Endothelial cell of umbilical vein (primary cell): ENCODE measurements at regions of chr1 and their contacts with region 1.

Region 1: DNA sequence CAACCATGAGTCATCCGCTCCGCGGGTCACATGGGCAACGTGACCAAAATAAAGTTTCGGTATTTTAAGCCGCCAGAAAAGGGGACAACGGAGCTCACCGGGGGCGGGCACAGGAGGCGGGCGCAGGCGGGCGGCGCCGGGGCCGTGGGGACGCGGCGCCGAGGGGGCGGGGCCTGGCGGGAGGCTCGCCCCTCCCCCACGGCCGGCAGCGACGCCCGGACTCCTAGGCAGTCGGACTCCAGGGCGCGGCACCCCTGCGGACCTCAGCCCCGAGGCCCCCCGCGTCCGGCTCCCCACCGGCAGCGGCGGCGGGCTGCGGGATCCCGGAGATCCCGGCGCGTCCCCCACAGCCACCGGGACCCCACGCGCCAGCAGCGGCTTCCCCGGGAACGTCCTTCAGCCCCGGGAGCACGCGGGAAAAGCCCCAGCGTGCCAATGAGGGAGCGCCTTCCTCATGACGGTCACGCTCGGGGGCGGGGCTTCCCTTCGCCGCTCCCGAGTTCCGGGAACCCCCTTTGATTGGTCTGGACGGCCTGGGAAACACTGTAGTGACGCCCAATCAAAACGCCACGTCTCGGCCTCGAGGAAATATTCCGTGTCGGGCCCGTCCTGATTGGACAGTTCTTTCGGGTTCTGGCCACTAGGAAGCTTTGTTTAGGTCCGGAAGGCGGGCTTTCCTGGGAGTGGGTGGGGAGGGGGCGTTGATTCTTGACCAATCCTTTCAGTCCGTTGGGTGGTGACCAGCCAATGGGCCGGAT is 515 bp upstream of the CAMTA1 start:
- DNase-seq: peak; percentile 100
- H3K4me3 ChIP-seq: peak overlapping the region; percentile 44 to 83 (median 79)
- H3K27ac ChIP-seq: peak overlapping the region; percentile 95
- H3K4me1 ChIP-seq: peaks cover 18% of the 10 kb centered on the region
- H3K27me3 ChIP-seq: no peaks in the 10 kb centered on the region
- CTCF ChIP-seq: no peak
- POLR2A ChIP-seq: peak; percentile 66

Region 2: GRCh38 chr1:6489799-6490180 is 294.9 kb before region 1 on chr1:
- CTCF ChIA-PET with region 1: no interaction called
- POLR2A ChIA-PET with region 1: no interaction called
- dilution Hi-C with region 1: no loop called
- intact Hi-C with region 1: loop called (anchors 10 kb)
- DNase-seq: peak; percentile 71
- H3K4me3 ChIP-seq: peak overlapping the region; percentile 26 to 62 (median 43)
- H3K27ac ChIP-seq: peak overlapping the region; percentile 86
- H3K4me1 ChIP-seq: peaks cover 44% of the 10 kb centered on the region
- H3K27me3 ChIP-seq: no peaks in the 10 kb centered on the region
- CTCF ChIP-seq: peak; percentile 90 to 97
- POLR2A ChIP-seq: no peak

Region 3: GRCh38 chr1:6701437-6702153 is 83.1 kb before region 1 on chr1 and contains the start of gene DNAJC11:
- CTCF ChIA-PET with region 1: interaction called, 9 read pairs
- POLR2A ChIA-PET with region 1: no interaction called
- dilution Hi-C with region 1: no loop called
- intact Hi-C with region 1: loop called (anchors 1 kb)
- DNase-seq: peak; percentile 86
- H3K4me3 ChIP-seq: peak within 1 kb of the TSS; percentile 77 to 91 (median 80)
- H3K27ac ChIP-seq: peak within 1 kb of the TSS; percentile 59
- H3K4me1 ChIP-seq: peaks cover 9% of the 10 kb centered on the region
- H3K27me3 ChIP-seq: no peaks in the 10 kb centered on the region
- CTCF ChIP-seq: peak; percentile 71 to 100
- POLR2A ChIP-seq: peak; percentile 65
- total RNA-seq, gene DNAJC11: 64.3 and 65.9 TPM in 2 replicates

Region 4: DNA sequence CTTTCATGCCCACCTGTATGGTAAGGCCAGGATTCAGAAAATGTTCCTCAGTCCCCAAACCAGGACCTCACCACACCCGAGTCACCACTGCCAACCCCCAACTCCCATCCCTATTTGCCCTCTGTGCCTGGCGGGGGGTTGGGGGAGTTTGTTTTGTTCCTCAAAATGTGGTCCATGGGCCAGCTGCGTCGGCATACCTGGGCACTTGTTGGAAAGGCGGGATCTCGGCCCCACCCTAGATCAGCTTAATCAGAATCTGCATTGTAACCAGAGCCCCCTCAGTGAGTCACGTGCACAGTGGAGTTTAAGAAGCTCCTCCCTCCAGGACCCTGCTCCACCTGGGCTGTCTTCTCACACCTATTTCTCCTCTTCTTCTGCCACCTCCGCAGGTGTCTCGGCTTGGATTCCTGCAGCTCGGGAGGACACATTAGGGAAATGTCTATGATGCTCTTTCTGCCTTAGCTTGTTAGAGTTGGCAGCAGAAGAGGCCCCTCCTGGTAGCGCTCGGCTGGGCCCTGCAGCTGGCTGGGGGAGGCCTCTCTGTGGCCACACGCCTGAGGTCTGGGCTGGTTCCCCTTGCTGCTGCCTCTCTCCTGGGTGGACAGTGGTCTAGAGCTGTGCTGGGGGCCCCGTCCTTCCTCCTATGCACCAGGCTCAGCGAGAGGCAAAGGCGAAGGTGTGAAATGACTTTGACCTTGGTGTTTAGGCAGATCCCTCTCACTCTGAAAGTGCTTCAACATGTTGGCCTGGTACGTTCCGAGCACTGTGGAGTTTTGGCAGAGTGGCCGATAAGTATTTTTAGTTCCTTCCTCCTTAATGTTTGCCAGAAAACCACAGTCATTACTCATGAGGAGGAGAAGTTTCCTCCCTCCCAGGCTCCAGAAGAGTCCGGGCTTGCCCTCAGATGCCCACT is 41.3 kb before region 1 on chr1:
- CTCF ChIA-PET with region 1: no interaction called
- POLR2A ChIA-PET with region 1: no interaction called
- dilution Hi-C with region 1: no loop called
- intact Hi-C with region 1: loop called (anchors 1 kb)
- DNase-seq: peak; percentile 65
- H3K4me3 ChIP-seq: no peak overlapping the region
- H3K27ac ChIP-seq: no peak overlapping the region
- H3K4me1 ChIP-seq: peaks cover 8% of the 10 kb centered on the region
- H3K27me3 ChIP-seq: no peaks in the 10 kb centered on the region
- CTCF ChIP-seq: no peak
- POLR2A ChIP-seq: no peak

Region 5: DNA sequence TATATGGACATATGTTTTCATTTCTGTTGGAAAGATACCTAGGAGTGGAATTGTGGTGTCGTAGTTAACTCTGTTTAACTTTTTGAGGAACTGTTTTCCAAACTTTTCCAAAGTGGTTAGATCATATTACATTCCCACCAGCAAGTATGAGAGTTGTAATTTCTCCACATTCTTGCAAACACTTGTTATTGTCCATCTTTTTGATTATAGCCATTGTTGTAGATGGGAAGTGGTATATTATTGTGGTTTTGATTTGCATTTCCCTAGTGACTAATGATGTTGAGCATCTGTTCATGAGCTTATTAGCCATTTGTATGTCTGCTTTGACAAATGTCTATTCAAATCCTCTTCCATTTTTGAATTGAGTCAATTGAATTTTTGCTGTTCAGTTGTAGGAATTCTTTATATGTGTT is 20.3 kb after region 1 on chr1:
- CTCF ChIA-PET with region 1: no interaction called
- POLR2A ChIA-PET with region 1: no interaction called
- dilution Hi-C with region 1: no loop called
- intact Hi-C with region 1: no loop called
- DNase-seq: peak; percentile 72
- H3K4me3 ChIP-seq: no peak overlapping the region
- H3K27ac ChIP-seq: no peak overlapping the region
- H3K4me1 ChIP-seq: peaks cover 33% of the 10 kb centered on the region
- H3K27me3 ChIP-seq: no peaks in the 10 kb centered on the region
- CTCF ChIP-seq: no peak
- POLR2A ChIP-seq: no peak

Region 6: GRCh38 chr1:6832531-6833188 is 47.9 kb after region 1 on chr1:
- CTCF ChIA-PET with region 1: no interaction called
- POLR2A ChIA-PET with region 1: no interaction called
- dilution Hi-C with region 1: no loop called
- intact Hi-C with region 1: no loop called
- DNase-seq: no peak
- H3K4me3 ChIP-seq: no peak overlapping the region
- H3K27ac ChIP-seq: no peak overlapping the region
- H3K4me1 ChIP-seq: no peaks in the 10 kb centered on the region
- H3K27me3 ChIP-seq: no peaks in the 10 kb centered on the region
- CTCF ChIP-seq: no peak
- POLR2A ChIP-seq: no peak

Region 7: GRCh38 chr1:6898974-6899539 is 114.3 kb after region 1 on chr1:
- CTCF ChIA-PET with region 1: no interaction called
- POLR2A ChIA-PET with region 1: no interaction called
- dilution Hi-C with region 1: no loop called
- intact Hi-C with region 1: no loop called
- DNase-seq: no peak
- H3K4me3 ChIP-seq: no peak overlapping the region
- H3K27ac ChIP-seq: no peak overlapping the region
- H3K4me1 ChIP-seq: no peaks in the 10 kb centered on the region
- H3K27me3 ChIP-seq: no peaks in the 10 kb centered on the region
- CTCF ChIP-seq: no peak
- POLR2A ChIP-seq: no peak

Region 8: DNA sequence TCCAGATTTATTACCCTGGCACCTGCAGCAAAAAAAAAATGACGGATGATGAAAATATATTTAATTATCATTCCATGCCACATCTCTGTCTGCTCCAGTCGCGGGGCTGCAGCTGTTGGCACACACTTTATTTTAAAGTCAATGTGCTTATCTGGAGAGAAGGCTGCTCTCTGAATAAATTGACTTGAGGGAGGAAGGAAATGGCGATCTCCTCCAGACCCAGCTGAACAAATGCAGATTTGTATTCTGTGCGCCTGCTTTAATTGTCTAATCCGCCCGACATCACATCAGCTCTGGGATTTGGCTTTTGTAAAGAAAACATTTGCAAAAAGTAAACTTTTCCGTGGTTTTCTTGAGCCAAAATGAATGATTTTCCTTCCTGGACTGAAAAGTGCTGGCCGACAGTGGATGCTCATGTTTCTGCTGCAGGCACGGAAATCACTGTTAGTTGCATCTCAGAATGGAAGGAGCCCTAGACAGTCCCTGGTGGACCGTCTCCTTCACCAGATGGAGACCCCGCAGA is 150.7 kb after region 1 on chr1:
- CTCF ChIA-PET with region 1: no interaction called
- POLR2A ChIA-PET with region 1: no interaction called
- dilution Hi-C with region 1: no loop called
- intact Hi-C with region 1: loop called (anchors 1 kb)
- DNase-seq: peak; percentile 99
- H3K4me3 ChIP-seq: peak overlapping the region in 1 of 3 experiments; percentile 50
- H3K27ac ChIP-seq: peak overlapping the region; percentile 83
- H3K4me1 ChIP-seq: peaks cover 9% of the 10 kb centered on the region
- H3K27me3 ChIP-seq: peaks cover 3 to 13% of the 10 kb centered on the region in 2 experiments
- CTCF ChIP-seq: no peak
- POLR2A ChIP-seq: peak; percentile 34

Region 9: GRCh38 chr1:7070389-7071029 is 285.8 kb after region 1 on chr1:
- CTCF ChIA-PET with region 1: interaction called, 22 read pairs
- POLR2A ChIA-PET with region 1: no interaction called
- dilution Hi-C with region 1: no loop called
- intact Hi-C with region 1: no loop called
- DNase-seq: peak; percentile 69
- H3K4me3 ChIP-seq: peak overlapping the region in 2 of 3 experiments; percentile 16 to 20
- H3K27ac ChIP-seq: no peak overlapping the region
- H3K4me1 ChIP-seq: peaks cover 4% of the 10 kb centered on the region
- H3K27me3 ChIP-seq: no peaks in the 10 kb centered on the region
- CTCF ChIP-seq: peak; percentile 73 to 95
- POLR2A ChIP-seq: no peak

Region 10: DNA sequence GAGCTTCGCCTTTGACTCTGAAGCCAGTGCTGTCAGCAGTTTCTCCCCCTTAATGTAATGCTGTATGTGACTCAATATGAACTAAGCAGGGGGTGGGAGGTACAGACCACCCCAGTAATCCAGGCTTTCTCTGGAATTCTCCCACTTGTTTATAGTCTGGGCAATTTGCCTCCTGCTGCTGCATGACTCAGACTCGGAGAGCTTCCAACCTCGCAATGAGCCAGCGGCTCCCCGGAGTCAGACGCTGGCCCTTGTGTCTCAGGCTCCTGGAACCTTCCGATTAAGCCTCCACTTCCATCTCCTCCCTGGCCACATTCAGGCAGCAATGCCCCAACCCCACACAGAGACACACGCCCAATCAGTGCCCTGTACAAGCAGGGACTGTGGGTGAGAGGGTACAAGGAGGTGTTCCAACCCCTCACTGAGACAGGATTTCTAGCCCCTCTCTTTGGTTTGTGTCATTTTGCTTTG is 514.6 kb after region 1 on chr1:
- CTCF ChIA-PET with region 1: no interaction called
- POLR2A ChIA-PET with region 1: no interaction called
- dilution Hi-C with region 1: no loop called
- intact Hi-C with region 1: no loop called
- DNase-seq: peak; percentile 93
- H3K4me3 ChIP-seq: no peak overlapping the region
- H3K27ac ChIP-seq: peak overlapping the region; percentile 90
- H3K4me1 ChIP-seq: peaks cover 17% of the 10 kb centered on the region
- H3K27me3 ChIP-seq: no peaks in the 10 kb centered on the region
- CTCF ChIP-seq: no peak
- POLR2A ChIP-seq: no peak

Region 11: DNA sequence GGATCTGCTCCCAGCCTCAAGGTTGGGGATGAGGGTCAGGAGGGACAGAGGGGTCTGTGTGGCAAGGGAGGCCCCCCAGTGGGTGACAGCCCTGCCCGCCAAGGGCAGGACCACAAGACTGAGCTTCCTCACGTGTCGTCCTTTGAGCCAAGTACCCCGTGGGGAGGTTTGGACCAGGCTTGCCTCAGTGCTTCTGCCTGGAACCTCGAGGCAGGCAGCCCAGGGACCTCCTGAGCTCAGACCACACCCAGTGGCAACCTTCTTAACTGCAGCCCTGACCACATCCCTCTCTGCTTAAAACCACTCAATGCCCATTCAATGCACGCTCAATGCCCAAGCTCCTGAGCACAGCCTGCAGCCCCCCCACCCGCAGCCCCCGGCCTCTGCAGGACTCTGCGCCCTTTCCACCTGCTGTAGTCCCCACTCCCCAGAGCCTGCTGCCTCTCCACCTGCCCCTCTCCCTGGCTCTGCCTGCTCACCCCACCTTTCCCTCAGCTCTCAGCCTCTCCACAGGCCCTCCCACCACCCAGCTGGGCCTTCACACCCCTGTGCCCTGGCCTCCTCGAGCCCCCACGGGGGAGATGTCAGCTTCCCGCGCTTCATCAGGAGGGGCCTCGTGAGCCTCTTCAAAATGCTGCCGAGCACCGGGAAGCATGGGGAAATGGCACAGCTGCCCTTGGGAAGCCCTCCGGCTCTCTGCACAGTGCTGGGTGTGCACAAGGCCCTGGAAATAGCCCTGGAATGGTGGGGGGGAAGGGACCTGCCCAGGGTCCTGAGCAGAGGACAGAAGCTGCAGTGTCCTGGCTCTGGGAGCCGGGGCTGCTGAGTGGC is 857.1 kb after region 1 on chr1:
- CTCF ChIA-PET with region 1: no interaction called
- POLR2A ChIA-PET with region 1: no interaction called
- dilution Hi-C with region 1: no loop called
- intact Hi-C with region 1: loop called (anchors 5 kb)
- DNase-seq: no peak
- H3K4me3 ChIP-seq: no peak overlapping the region
- H3K27ac ChIP-seq: no peak overlapping the region
- H3K4me1 ChIP-seq: peaks cover 6% of the 10 kb centered on the region
- H3K27me3 ChIP-seq: no peaks in the 10 kb centered on the region
- CTCF ChIP-seq: no peak
- POLR2A ChIP-seq: no peak